Dorsolateral prefrontal cortex (tissue), 120 donors: ENCODE measurements at regions of chr1 and their contacts with region 1.

Region 1: GRCh38 chr1:234722904-234723720 is 113.1 kb upstream of the IRF2BP2 start:
- DNase-seq: peak in 7 of 10 donors; percentile 51 to 76 (median 62)
- H3K4me3 ChIP-seq: peak overlapping the region in 42 of 59 donors; percentile 4 to 52 (median 28)
- H3K27ac ChIP-seq: peak overlapping the region; percentile 60 to 100 (median 98)
- H3K27me3 ChIP-seq: no peaks in the 10 kb centered on the region
- CTCF ChIP-seq: no peak

Region 2: GRCh38 chr1:234499119-234499942 is 223.8 kb before region 1 on chr1:
- intact Hi-C with region 1: loop called in 1 of 2 experiments (anchors 5 kb)
- DNase-seq: peak; percentile 86 to 96 (median 92)
- H3K4me3 ChIP-seq: peak overlapping the region in 56 of 59 donors; percentile 1 to 60 (median 36)
- H3K27ac ChIP-seq: peak overlapping the region; percentile 73 to 97 (median 90)
- H3K27me3 ChIP-seq: no peaks in the 10 kb centered on the region
- CTCF ChIP-seq: peak; percentile 88 to 99 (median 97)

Region 3: GRCh38 chr1:234676103-234676594 is 47.0 kb before region 1 on chr1:
- intact Hi-C with region 1: loop called (anchors 5 kb)
- DNase-seq: peak; percentile 84 to 97 (median 92)
- H3K4me3 ChIP-seq: peak overlapping the region; percentile 17 to 74 (median 56)
- H3K27ac ChIP-seq: peak overlapping the region; percentile 35 to 96 (median 87)
- H3K27me3 ChIP-seq: no peaks in the 10 kb centered on the region
- CTCF ChIP-seq: peak in 17 of 56 donors; percentile 4 to 32 (median 21)

Region 4: DNA sequence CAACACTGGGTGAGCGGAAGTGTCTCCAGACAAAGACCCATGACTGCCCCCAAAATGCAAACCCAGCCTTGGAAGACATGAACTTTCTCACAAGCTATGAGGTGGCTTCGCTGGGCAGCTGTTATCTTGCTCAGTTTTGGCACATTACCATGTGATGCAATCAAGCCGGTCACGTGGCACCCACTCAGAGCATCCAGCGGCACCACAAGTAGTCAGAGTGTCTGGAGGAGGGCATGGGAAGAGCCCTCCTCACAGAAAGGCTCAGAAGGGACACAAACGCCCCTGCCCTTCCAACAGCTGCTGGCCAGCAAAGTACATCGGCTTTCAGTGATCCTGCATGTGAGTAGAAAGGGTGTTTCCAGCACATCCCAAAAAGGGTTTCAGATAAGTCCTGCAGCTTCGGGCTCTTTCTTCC is 32.3 kb after region 1 on chr1:
- intact Hi-C with region 1: loop called in 1 of 2 experiments (anchors 1 kb)
- DNase-seq: peak in 9 of 10 donors; percentile 80 to 95 (median 84)
- H3K4me3 ChIP-seq: peak overlapping the region in 20 of 59 donors; percentile 10 to 53 (median 26)
- H3K27ac ChIP-seq: peak overlapping the region in 37 of 59 donors; percentile 6 to 79 (median 55)
- H3K27me3 ChIP-seq: no peaks in the 10 kb centered on the region
- CTCF ChIP-seq: peak in 2 of 56 donors; percentile 6 to 13

Region 5: DNA sequence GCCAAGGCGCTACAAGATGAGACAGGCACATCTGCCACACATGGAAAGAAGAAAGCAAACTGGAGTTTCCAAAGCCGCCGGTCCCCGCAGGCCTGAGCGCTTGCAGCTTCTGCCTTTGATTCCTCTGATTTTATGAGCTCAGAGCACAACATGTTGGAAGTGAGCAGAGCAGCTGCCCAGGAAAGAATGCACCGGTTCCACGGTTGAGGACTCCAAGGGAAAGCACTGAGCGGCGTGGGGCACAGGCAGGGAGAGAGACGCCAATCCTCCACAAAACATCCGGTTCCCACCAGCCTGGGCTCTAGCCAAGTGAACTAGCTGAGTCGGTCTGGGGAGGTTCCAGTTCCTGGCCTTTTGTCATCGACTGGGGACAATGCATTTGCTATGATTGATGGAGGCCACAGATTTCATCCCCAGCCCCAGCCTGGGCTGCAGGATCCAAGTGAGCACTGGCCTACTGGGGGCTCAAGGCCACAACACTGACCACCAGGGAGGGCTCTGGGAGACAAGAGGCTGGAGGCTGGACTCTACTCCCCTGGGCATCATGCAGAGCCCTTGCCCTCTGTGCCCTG is 139.9 kb after region 1 on chr1:
- intact Hi-C with region 1: loop called in 1 of 2 experiments (anchors 2 kb)
- DNase-seq: peak; percentile 52 to 81 (median 71)
- H3K4me3 ChIP-seq: peak overlapping the region in 49 of 59 donors; percentile 0 to 60 (median 29)
- H3K27ac ChIP-seq: peak overlapping the region; percentile 28 to 91 (median 83)
- H3K27me3 ChIP-seq: no peaks in the 10 kb centered on the region
- CTCF ChIP-seq: peak in 2 of 56 donors; percentile 12 to 18

Region 6: GRCh38 chr1:235075188-235075926 is 352.2 kb after region 1 on chr1:
- intact Hi-C with region 1: loop called (anchors 5 kb)
- DNase-seq: peak in 8 of 10 donors; percentile 52 to 89 (median 77)
- H3K4me3 ChIP-seq: peak overlapping the region in 43 of 59 donors; percentile 1 to 51 (median 23)
- H3K27ac ChIP-seq: peak overlapping the region; percentile 34 to 95 (median 87)
- H3K27me3 ChIP-seq: no peaks in the 10 kb centered on the region
- CTCF ChIP-seq: no peak